ENCODE measurements at regions of chr6 and their contacts with region 1.

Region 1: DNA sequence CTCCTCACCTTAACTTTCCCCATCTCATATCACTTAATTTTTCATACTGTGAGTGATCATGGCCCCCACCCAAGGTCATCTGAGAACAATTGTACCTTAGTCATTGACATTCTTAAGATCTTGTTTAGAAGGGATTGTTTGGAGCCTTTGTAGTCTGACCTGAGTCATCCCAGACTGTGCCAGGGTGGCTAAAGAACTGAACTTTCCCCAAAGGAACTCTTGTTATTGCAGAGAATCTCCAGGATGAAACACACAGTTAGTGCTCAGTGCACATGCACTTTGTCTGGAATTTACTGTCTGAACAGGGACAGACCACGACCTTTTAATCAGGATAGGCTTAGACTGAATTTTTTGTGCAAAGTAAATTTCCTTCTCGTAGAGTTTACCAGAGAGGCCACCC is 112.6 kb upstream of the CCN2 start:
- DNase-seq: peak; percentile 47
- H3K4me3 ChIP-seq: no peak overlapping the region
- H3K27ac ChIP-seq: peak overlapping the region; percentile 57
- H3K27me3 ChIP-seq: no peaks in the 10 kb centered on the region
- CTCF ChIP-seq: no peak

Region 2: GRCh38 chr6:131909408-131910218 is 154.1 kb before region 1 on chr6:
- CTCF ChIA-PET with region 1: no interaction called
- POLR2A ChIA-PET with region 1: no interaction called
- DNase-seq: peak; percentile 47
- H3K4me3 ChIP-seq: no peak overlapping the region
- H3K27ac ChIP-seq: no peak overlapping the region
- H3K27me3 ChIP-seq: no peaks in the 10 kb centered on the region
- CTCF ChIP-seq: peak; percentile 94

Region 3: DNA sequence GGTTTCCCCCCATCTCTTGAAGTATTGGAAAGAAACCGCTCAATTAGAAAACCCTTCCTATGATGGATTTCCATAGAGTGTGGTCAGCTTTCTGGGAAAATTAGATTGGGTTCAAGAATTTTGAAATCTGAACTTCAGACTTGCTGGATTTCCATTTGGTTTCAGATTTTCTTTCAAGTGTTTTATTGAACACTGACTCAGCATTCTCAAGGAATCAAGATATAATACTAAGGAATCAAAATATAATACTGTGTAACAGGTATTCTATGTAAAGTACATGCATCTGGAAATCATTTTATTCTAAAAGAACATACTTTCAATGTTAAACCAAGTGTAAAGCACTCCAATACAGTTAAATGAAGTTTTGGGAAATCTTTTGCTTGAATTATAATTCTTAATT is 17.9 kb before region 1 on chr6:
- CTCF ChIA-PET with region 1: no interaction called
- POLR2A ChIA-PET with region 1: no interaction called
- DNase-seq: no peak
- H3K4me3 ChIP-seq: no peak overlapping the region
- H3K27ac ChIP-seq: no peak overlapping the region
- H3K27me3 ChIP-seq: no peaks in the 10 kb centered on the region
- CTCF ChIP-seq: no peak

Region 4: DNA sequence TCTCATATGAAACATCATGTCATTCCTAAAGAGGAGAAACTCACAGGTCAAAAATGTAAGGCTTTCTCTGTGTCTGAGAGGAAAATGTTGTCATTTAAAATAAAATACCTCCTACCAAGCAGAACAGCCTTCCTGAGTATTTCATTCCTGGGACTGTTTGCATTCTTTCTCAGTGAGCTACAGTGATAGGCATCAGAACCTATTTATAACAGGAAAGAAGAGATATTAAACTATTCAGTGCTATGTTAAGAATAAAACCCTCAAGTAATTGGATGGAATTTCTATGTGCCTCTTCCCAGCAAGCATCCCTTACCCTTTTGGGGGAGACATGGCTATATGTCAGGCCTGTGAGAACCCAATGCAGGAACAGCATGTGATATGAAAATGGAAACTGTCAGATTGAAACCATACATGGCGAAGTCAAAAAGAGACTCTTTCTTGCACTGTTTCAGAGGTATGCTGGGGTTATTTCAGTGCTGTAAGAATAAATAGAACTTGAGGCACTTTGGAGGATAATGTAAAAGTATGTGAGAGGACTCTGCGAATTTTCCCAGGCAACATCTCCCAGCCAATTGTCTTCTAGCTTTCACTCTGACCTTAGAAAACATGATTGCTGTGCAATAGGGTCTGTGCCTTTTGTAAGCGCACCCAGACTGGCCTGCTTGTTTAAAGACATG is 21.2 kb after region 1 on chr6:
- CTCF ChIA-PET with region 1: no interaction called
- POLR2A ChIA-PET with region 1: interaction called, 11 read pairs
- DNase-seq: peak; percentile 95
- H3K4me3 ChIP-seq: no peak overlapping the region
- H3K27ac ChIP-seq: peak overlapping the region; percentile 99
- H3K27me3 ChIP-seq: no peaks in the 10 kb centered on the region
- CTCF ChIP-seq: no peak

Region 5: GRCh38 chr6:132122871-132123270 is 59.1 kb after region 1 on chr6:
- CTCF ChIA-PET with region 1: interaction called, 3 read pairs
- POLR2A ChIA-PET with region 1: interaction called, 13 read pairs
- DNase-seq: peak; percentile 100
- H3K4me3 ChIP-seq: no peak overlapping the region
- H3K27ac ChIP-seq: peak overlapping the region; percentile 98
- H3K27me3 ChIP-seq: no peaks in the 10 kb centered on the region
- CTCF ChIP-seq: no peak

Measured in AG04450 (cell line).